Naive thymus-derived CD4-positive, alpha-beta T cell (primary cell): ENCODE measurements at regions of chr12 and their contacts with region 1.

Region 1: DNA sequence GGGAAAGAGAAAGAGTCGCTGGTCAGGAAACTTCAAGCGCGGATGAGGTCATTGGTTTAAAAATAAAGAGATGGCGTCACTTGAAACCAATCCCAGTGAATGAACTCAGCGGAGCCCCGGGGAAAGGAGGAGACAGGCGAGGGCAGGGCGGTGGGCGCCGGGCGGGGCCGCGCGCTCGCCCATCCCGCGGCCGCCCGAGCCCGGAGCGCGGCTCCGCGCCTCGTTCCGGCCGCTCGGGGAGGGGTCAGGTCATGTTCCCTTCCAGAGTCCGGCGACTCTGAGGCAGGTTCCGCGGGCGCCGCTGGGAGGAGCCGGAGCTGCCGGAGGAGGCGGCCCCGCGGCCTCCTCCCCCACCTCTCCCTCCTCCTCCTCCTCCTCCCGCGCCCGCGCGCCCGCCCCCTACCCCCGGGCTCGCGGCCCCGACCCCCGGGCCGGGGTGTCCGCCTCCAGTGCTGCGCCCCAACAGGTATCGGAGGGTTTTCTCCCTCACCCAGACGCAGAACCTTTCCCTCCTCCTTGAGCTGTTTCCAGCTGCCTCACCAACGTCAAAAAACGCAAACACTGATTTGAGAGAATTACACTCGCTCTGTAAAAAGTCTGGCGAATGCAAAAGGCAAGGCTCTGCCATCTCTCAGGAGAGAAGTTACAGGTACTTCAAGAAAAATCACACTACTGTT is at the start of gene DUSP16:
- DNase-seq: peak; percentile 75 to 92 (median 88)
- ATAC-seq: peak; percentile 85
- H3K4me3 ChIP-seq: peak within 1 kb of the TSS; percentile 62
- H3K4me3 Mint-ChIP-seq: peak within 1 kb of the TSS; percentile 87 to 97 (median 92)
- H3K27ac ChIP-seq: peak within 1 kb of the TSS; percentile 92
- H3K27ac Mint-ChIP-seq: peak within 1 kb of the TSS; percentile 94 to 100 (median 99)
- H3K4me1 ChIP-seq: peaks cover 14 to 16% of the 10 kb centered on the region in 2 donors
- H3K4me1 Mint-ChIP-seq: peaks cover 14 to 50% (median 37%) of the 10 kb centered on the region in 7 donors
- H3K27me3 ChIP-seq: no peaks in the 10 kb centered on the region
- H3K27me3 Mint-ChIP-seq: no peaks in the 10 kb centered on the region
- total RNA-seq, gene DUSP16: 26.8 to 42.8 (median 38.9) TPM

Region 2: GRCh38 chr12:10740182-10740581 is 1822.5 kb before region 1 on chr12:
- CTCF ChIA-PET with region 1: no interaction called
- POLR2A ChIA-PET with region 1: no interaction called
- intact Hi-C with region 1: no loop called
- DNase-seq: no peak
- ATAC-seq: no peak
- H3K4me3 ChIP-seq: no peak overlapping the region
- H3K4me3 Mint-ChIP-seq: no peak overlapping the region
- H3K27ac ChIP-seq: no peak overlapping the region
- H3K27ac Mint-ChIP-seq: peak overlapping the region in 1 of 9 donors; percentile 40
- H3K4me1 ChIP-seq: no peaks in the 10 kb centered on the region
- H3K4me1 Mint-ChIP-seq: peaks cover 0 to 11% (median 0%) of the 10 kb centered on the region in 7 donors
- H3K27me3 ChIP-seq: no peaks in the 10 kb centered on the region
- H3K27me3 Mint-ChIP-seq: peaks cover 0 to 44% (median 8%) of the 10 kb centered on the region in 5 donors

Region 3: GRCh38 chr12:12356886-12357718 is 205.6 kb before region 1 on chr12 and contains the start of gene BORCS5:
- CTCF ChIA-PET with region 1: interaction called, 5 read pairs
- POLR2A ChIA-PET with region 1: interaction called, 16 read pairs
- intact Hi-C with region 1: loop called (anchors 1 kb)
- DNase-seq: peak; percentile 94 to 99 (median 97)
- ATAC-seq: peak; percentile 96
- H3K4me3 ChIP-seq: peak within 1 kb of the TSS; percentile 85
- H3K4me3 Mint-ChIP-seq: peak within 1 kb of the TSS; percentile 90 to 99 (median 96)
- H3K27ac ChIP-seq: peak within 1 kb of the TSS; percentile 99
- H3K27ac Mint-ChIP-seq: peak within 1 kb of the TSS; percentile 92 to 99 (median 98)
- H3K4me1 ChIP-seq: peaks cover 14 to 28% of the 10 kb centered on the region in 2 donors
- H3K4me1 Mint-ChIP-seq: peaks cover 31 to 74% (median 64%) of the 10 kb centered on the region in 7 donors
- H3K27me3 ChIP-seq: no peaks in the 10 kb centered on the region
- H3K27me3 Mint-ChIP-seq: no peaks in the 10 kb centered on the region
- total RNA-seq, gene BORCS5: 15.3 to 28.2 (median 22.1) TPM

Region 4: DNA sequence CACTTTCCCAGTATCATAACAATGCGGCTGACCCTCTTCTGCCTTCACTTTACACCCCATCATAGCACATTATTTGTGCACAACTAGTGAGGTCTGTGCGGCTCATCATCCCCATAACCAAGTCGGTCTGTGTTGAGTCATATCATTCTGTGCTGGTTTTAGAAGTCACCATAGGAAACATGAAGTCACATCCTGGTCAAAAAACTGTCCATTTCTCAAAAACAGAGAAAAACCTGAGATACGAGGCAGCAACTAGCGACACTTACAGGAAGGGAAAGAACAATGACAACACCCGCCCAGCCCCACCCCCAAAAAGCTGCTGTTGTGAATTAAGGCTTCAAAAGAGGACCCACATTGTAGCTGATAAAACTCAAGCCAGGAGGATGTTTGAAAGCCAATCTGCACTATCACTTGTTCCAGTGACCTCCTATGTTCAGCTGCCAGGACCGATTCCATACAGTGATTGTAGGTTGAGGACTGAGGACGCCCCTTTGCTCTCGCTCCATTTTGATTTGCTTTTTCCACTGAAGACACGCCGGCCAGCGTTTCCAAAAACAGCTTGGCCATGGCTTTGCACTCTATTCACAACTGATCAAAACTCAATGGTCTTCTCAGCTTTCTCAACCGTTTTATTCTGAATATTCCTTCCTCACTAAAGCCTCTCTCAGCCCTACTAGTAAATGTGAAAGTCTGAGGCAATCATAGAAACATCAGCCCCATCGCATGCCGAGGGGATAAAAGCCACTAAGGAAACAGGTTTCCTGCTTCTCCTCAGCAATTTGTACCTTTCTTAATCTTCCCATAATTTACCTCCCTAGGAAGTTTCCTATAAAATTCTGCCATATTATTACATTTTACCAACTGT is 87.6 kb before region 1 on chr12:
- CTCF ChIA-PET with region 1: interaction called, 4 read pairs
- POLR2A ChIA-PET with region 1: interaction called, 4 read pairs
- intact Hi-C with region 1: loop called in 1 of 2 experiments (anchors 2 kb)
- DNase-seq: peak in 3 of 9 donors; percentile 22 to 49 (median 37)
- ATAC-seq: peak; percentile 84
- H3K4me3 ChIP-seq: peak overlapping the region; percentile 7
- H3K4me3 Mint-ChIP-seq: peak overlapping the region in 9 of 10 donors; percentile 11 to 76 (median 43)
- H3K27ac ChIP-seq: peak overlapping the region; percentile 39
- H3K27ac Mint-ChIP-seq: peak overlapping the region; percentile 72 to 95 (median 91)
- H3K4me1 ChIP-seq: peaks cover 7 to 17% of the 10 kb centered on the region in 2 donors
- H3K4me1 Mint-ChIP-seq: peaks cover 10 to 72% (median 42%) of the 10 kb centered on the region in 7 donors
- H3K27me3 ChIP-seq: no peaks in the 10 kb centered on the region
- H3K27me3 Mint-ChIP-seq: no peaks in the 10 kb centered on the region

Region 5: GRCh38 chr12:12548713-12549112 is 14.0 kb before region 1 on chr12:
- CTCF ChIA-PET with region 1: no interaction called
- POLR2A ChIA-PET with region 1: interaction called, 11 read pairs
- intact Hi-C with region 1: no loop called
- DNase-seq: no peak
- ATAC-seq: no peak
- H3K4me3 ChIP-seq: no peak overlapping the region
- H3K4me3 Mint-ChIP-seq: no peak overlapping the region
- H3K27ac ChIP-seq: no peak overlapping the region
- H3K27ac Mint-ChIP-seq: peak overlapping the region in 3 of 9 donors; percentile 31 to 56 (median 48)
- H3K4me1 ChIP-seq: no peaks in the 10 kb centered on the region
- H3K4me1 Mint-ChIP-seq: peaks cover 6 to 39% (median 21%) of the 10 kb centered on the region in 7 donors
- H3K27me3 ChIP-seq: no peaks in the 10 kb centered on the region
- H3K27me3 Mint-ChIP-seq: no peaks in the 10 kb centered on the region

Region 6: DNA sequence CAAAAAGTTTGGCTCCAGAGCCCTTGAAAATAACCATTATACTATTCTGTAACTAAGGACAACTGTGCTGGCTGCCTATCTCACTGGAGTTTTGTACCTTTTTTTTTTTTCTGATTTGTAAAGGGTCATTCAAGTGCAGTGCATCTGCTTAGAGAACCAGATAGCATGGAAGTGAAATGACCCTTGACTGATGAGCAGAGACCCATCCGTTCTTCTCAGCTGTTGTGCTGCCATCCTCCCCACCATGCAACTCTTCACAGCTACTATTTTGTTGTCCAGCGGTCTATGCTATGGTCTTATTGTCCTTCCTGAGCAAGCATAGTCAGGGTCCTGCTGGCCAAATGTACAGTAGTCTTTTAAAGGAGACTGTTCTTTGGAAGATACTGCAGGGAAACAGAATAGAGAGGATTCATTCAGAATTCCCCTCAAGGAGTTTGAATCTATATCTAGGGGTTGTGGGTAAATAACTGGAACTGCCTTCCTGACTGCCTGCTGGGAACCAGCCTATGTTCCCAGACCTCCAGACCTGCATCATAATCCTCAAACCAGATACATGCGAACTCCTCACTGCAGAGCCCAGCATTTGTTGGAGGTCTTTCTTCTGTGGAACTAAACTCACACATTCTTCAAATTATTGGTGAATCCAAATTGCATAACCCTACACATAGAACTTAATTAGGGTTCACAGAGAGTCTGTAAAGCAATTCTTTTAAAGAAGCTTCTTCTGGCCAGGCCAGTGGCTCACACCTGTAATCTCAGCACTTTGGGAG is 92.2 kb after region 1 on chr12:
- CTCF ChIA-PET with region 1: no interaction called
- POLR2A ChIA-PET with region 1: interaction called, 4 read pairs
- intact Hi-C with region 1: loop called (anchors 1 to 5 kb)
- DNase-seq: no peak
- ATAC-seq: no peak
- H3K4me3 ChIP-seq: no peak overlapping the region
- H3K4me3 Mint-ChIP-seq: no peak overlapping the region
- H3K27ac ChIP-seq: no peak overlapping the region
- H3K27ac Mint-ChIP-seq: peak overlapping the region in 2 of 9 donors; percentile 10 to 53
- H3K4me1 ChIP-seq: no peaks in the 10 kb centered on the region
- H3K4me1 Mint-ChIP-seq: peaks cover 0 to 19% (median 13%) of the 10 kb centered on the region in 7 donors
- H3K27me3 ChIP-seq: no peaks in the 10 kb centered on the region
- H3K27me3 Mint-ChIP-seq: no peaks in the 10 kb centered on the region

Region 7: DNA sequence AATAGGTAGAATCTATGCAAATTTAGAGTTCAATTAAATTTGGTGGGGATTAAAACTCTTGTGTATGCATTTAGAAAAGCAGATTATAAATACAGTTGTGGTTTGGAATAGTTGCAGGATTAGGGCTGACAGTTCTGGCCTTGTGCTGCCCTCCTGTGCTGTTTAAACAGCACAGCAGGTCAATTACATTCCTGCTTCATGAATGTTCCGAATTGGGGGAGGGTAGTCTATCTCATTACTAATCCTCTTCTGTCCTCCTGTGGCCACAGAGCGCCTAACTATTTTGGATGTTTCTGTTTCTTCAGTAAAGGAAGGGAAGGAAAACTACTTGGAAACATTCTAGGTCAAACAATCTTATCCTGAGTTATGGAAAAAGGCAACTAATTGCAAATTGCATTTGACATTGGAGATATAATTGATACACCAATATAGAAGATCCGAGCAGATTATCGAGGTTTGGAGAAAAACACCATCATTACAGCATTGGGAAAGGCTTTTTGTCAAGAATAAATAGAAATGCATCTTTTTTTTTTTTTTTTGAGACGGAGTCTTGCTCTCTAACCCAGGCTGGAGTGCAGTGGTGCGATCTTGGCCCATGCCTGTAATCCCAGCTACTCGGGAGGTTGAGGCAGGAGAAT is 142.0 kb after region 1 on chr12:
- CTCF ChIA-PET with region 1: no interaction called
- POLR2A ChIA-PET with region 1: interaction called, 5 read pairs
- intact Hi-C with region 1: loop called in 1 of 2 experiments (anchors 1 kb)
- DNase-seq: peak in 7 of 9 donors; percentile 44 to 71 (median 60)
- ATAC-seq: peak; percentile 92
- H3K4me3 ChIP-seq: no peak overlapping the region
- H3K4me3 Mint-ChIP-seq: peak overlapping the region in 9 of 10 donors; percentile 16 to 76 (median 58)
- H3K27ac ChIP-seq: no peak overlapping the region
- H3K27ac Mint-ChIP-seq: peak overlapping the region; percentile 15 to 80 (median 64)
- H3K4me1 ChIP-seq: peaks cover 18 to 37% of the 10 kb centered on the region in 2 donors
- H3K4me1 Mint-ChIP-seq: peaks cover 17 to 35% (median 24%) of the 10 kb centered on the region in 7 donors
- H3K27me3 ChIP-seq: no peaks in the 10 kb centered on the region
- H3K27me3 Mint-ChIP-seq: no peaks in the 10 kb centered on the region

Region 8: GRCh38 chr12:12736759-12737676 is 174.3 kb after region 1 on chr12:
- CTCF ChIA-PET with region 1: interaction called, 9 read pairs
- POLR2A ChIA-PET with region 1: interaction called, 12 read pairs
- intact Hi-C with region 1: loop called in 1 of 2 experiments (anchors 1 kb)
- DNase-seq: peak in 7 of 9 donors; percentile 32 to 59 (median 39)
- ATAC-seq: peak; percentile 93
- H3K4me3 ChIP-seq: peak overlapping the region; percentile 28
- H3K4me3 Mint-ChIP-seq: peak overlapping the region; percentile 53 to 82 (median 68)
- H3K27ac ChIP-seq: peak overlapping the region; percentile 54
- H3K27ac Mint-ChIP-seq: peak overlapping the region; percentile 75 to 93 (median 85)
- H3K4me1 ChIP-seq: peaks cover 9 to 33% of the 10 kb centered on the region in 2 donors
- H3K4me1 Mint-ChIP-seq: peaks cover 21 to 65% (median 35%) of the 10 kb centered on the region in 7 donors
- H3K27me3 ChIP-seq: no peaks in the 10 kb centered on the region
- H3K27me3 Mint-ChIP-seq: no peaks in the 10 kb centered on the region